CD8-positive, alpha-beta T cell (primary cell): ENCODE measurements at regions of chr2 and their contacts with region 1.

Region 1: DNA sequence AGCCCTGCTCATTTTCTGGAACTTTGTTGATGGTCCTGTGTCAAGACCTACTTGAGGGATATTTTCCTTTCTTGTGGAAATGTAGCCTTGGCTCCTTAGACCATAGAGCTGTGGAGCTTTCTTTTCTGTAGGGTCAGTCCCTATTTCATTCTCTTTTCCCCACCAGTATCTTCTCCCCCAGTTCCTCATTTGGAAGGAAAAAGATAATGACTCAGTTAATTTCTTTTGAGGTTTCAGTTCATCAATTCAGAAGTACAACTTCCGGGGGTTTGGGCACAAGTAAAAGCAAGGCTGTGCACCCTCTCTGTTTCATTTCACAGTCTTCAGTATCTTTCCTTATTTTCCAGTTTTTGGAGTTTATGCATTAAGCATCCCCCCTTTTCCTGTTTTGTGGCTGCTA is 70.7 kb downstream of the CDC42EP3 start:
- DNase-seq: peak in 1 of 9 experiments; percentile 46
- ATAC-seq: no peak
- H3K4me3 ChIP-seq: peak overlapping the region; percentile 42 to 66
- H3K4me3 Mint-ChIP-seq: peak overlapping the region; percentile 90
- H3K27ac ChIP-seq: peak overlapping the region; percentile 65 to 84
- H3K27ac Mint-ChIP-seq: peak overlapping the region; percentile 99
- H3K4me1 ChIP-seq: peaks cover 44% of the 10 kb centered on the region
- H3K4me1 Mint-ChIP-seq: peaks cover 54% of the 10 kb centered on the region
- H3K27me3 ChIP-seq: no peaks in the 10 kb centered on the region
- H3K27me3 Mint-ChIP-seq: no peaks in the 10 kb centered on the region
- CTCF ChIP-seq: no peak

Region 2: DNA sequence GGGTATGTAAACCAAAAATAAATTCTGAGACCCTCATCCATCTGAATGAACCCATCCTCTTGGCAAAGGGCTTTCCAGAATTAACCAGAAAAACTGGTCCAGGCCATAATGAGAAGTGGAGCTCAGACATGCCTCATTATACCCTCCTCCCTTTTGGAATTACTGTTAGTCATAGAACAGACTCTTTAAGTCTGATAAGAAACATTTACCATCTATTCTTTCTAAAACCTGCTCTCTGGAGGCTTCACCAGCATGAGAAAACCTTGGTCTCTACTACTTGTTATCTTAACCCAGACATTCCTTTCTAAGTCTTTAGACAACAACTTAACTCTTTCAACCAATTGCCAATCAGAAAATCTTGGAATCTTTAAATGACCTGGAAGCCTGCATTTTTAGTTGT is 173.5 kb before region 1 on chr2:
- CTCF ChIA-PET with region 1: no interaction called
- POLR2A ChIA-PET with region 1: no interaction called
- intact Hi-C with region 1: no loop called
- DNase-seq: no peak
- ATAC-seq: no peak
- H3K4me3 ChIP-seq: no peak overlapping the region
- H3K4me3 Mint-ChIP-seq: no peak overlapping the region
- H3K27ac ChIP-seq: no peak overlapping the region
- H3K27ac Mint-ChIP-seq: no peak overlapping the region
- H3K4me1 ChIP-seq: no peaks in the 10 kb centered on the region
- H3K4me1 Mint-ChIP-seq: no peaks in the 10 kb centered on the region
- H3K27me3 ChIP-seq: no peaks in the 10 kb centered on the region
- H3K27me3 Mint-ChIP-seq: no peaks in the 10 kb centered on the region
- CTCF ChIP-seq: no peak

Region 3: GRCh38 chr2:37615804-37616676 is 15.3 kb after region 1 on chr2:
- CTCF ChIA-PET with region 1: interaction called, 7 read pairs
- POLR2A ChIA-PET with region 1: interaction called, 24 read pairs
- intact Hi-C with region 1: loop called (anchors 1 to 2 kb)
- DNase-seq: peak; percentile 49 to 85 (median 73)
- ATAC-seq: peak; percentile 94
- H3K4me3 ChIP-seq: no peak overlapping the region
- H3K4me3 Mint-ChIP-seq: peak overlapping the region; percentile 44
- H3K27ac ChIP-seq: peak overlapping the region; percentile 46 to 77
- H3K27ac Mint-ChIP-seq: peak overlapping the region; percentile 93
- H3K4me1 ChIP-seq: peaks cover 38% of the 10 kb centered on the region
- H3K4me1 Mint-ChIP-seq: peaks cover 62% of the 10 kb centered on the region
- H3K27me3 ChIP-seq: no peaks in the 10 kb centered on the region
- H3K27me3 Mint-ChIP-seq: no peaks in the 10 kb centered on the region
- CTCF ChIP-seq: no peak

Region 4: GRCh38 chr2:37635504-37636380 is 35.0 kb after region 1 on chr2:
- CTCF ChIA-PET with region 1: interaction called, 3 read pairs
- POLR2A ChIA-PET with region 1: interaction called, 8 read pairs
- intact Hi-C with region 1: loop called in 1 of 2 experiments (anchors 5 kb)
- DNase-seq: peak; percentile 29 to 94 (median 68)
- ATAC-seq: peak; percentile 82
- H3K4me3 ChIP-seq: peak overlapping the region in 1 of 2 experiments; percentile 21
- H3K4me3 Mint-ChIP-seq: peak overlapping the region; percentile 32
- H3K27ac ChIP-seq: peak overlapping the region; percentile 50 to 92
- H3K27ac Mint-ChIP-seq: peak overlapping the region; percentile 92
- H3K4me1 ChIP-seq: peaks cover 41% of the 10 kb centered on the region
- H3K4me1 Mint-ChIP-seq: peaks cover 80% of the 10 kb centered on the region
- H3K27me3 ChIP-seq: no peaks in the 10 kb centered on the region
- H3K27me3 Mint-ChIP-seq: no peaks in the 10 kb centered on the region
- CTCF ChIP-seq: no peak